MCF 10A (cell line): ENCODE measurements at regions of chr3 and their contacts with region 1.

Region 1: GRCh38 chr3:99645277-99646106 is 7.1 kb downstream of the COL8A1 start:
- DNase-seq: peak; percentile 57
- H3K4me3 Mint-ChIP-seq: no peak overlapping the region
- H3K27ac Mint-ChIP-seq: peak overlapping the region; percentile 63
- H3K4me1 Mint-ChIP-seq: peaks cover 84% of the 10 kb centered on the region
- H3K27me3 Mint-ChIP-seq: no peaks in the 10 kb centered on the region
- CTCF ChIP-seq: peak; percentile 85

Region 2: DNA sequence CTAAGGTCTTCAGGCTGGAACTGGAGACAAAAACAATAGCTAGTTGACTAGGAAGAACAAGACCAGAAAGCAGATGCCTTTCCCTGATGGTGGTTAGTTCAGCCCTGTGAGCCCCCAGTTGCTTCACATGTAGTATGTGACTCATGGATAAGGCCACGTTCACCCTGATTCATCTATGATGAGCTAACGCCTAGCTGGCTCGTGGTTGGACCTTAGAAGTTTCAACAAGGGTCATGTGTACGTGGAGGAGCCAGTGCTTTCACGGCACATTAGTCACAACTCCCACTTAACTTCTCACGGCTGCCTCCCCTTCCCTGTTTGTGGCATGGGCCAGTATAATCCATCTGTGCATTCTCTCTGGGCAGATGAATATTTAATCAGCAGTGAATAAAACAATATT is 13.5 kb after region 1 on chr3:
- CTCF ChIA-PET with region 1: interaction called, 21 read pairs
- POLR2A ChIA-PET with region 1: interaction called, 4 read pairs
- intact Hi-C with region 1: no loop called
- DNase-seq: peak; percentile 94
- H3K4me3 Mint-ChIP-seq: no peak overlapping the region
- H3K27ac Mint-ChIP-seq: peak overlapping the region; percentile 63
- H3K4me1 Mint-ChIP-seq: peaks cover 47% of the 10 kb centered on the region
- H3K27me3 Mint-ChIP-seq: no peaks in the 10 kb centered on the region
- CTCF ChIP-seq: no peak

Region 3: DNA sequence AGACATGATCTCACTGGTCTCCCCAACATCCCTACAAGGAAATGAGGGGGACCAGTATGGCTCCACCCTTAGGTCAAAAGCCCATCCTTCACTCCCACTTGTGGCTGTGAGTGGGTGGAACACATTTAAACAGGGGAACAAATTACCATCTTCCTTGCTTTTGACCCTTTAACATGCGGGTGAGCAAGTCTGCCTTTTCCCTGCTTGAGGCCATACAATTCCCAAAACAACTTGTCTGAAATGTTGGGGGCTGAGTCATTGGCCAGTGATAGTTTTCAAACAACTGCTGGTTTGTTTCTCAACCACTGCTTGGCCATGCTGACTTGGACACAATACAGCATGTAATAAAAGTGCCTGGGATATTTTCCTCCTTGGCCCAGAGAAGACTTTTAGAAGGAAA is 32.5 kb after region 1 on chr3:
- CTCF ChIA-PET with region 1: interaction called, 209 read pairs
- POLR2A ChIA-PET with region 1: interaction called, 47 read pairs
- intact Hi-C with region 1: no loop called
- DNase-seq: peak; percentile 77
- H3K4me3 Mint-ChIP-seq: no peak overlapping the region
- H3K27ac Mint-ChIP-seq: peak overlapping the region; percentile 72
- H3K4me1 Mint-ChIP-seq: peaks cover 44% of the 10 kb centered on the region
- H3K27me3 Mint-ChIP-seq: no peaks in the 10 kb centered on the region
- CTCF ChIP-seq: no peak

Region 4: GRCh38 chr3:99686955-99687612 is 41.6 kb after region 1 on chr3:
- CTCF ChIA-PET with region 1: interaction called, 209 read pairs
- POLR2A ChIA-PET with region 1: interaction called, 6 read pairs
- intact Hi-C with region 1: loop called (anchors 1 kb)
- DNase-seq: peak; percentile 76
- H3K4me3 Mint-ChIP-seq: no peak overlapping the region
- H3K27ac Mint-ChIP-seq: peak overlapping the region; percentile 71
- H3K4me1 Mint-ChIP-seq: peaks cover 15% of the 10 kb centered on the region
- H3K27me3 Mint-ChIP-seq: no peaks in the 10 kb centered on the region
- CTCF ChIP-seq: peak; percentile 69

Region 5: GRCh38 chr3:99747915-99748314 is 102.4 kb after region 1 on chr3:
- CTCF ChIA-PET with region 1: interaction called, 24 read pairs
- POLR2A ChIA-PET with region 1: interaction called, 4 read pairs
- intact Hi-C with region 1: loop called (anchors 2 kb)
- DNase-seq: peak; percentile 49
- H3K4me3 Mint-ChIP-seq: no peak overlapping the region
- H3K27ac Mint-ChIP-seq: no peak overlapping the region
- H3K4me1 Mint-ChIP-seq: peaks cover 14% of the 10 kb centered on the region
- H3K27me3 Mint-ChIP-seq: no peaks in the 10 kb centered on the region
- CTCF ChIP-seq: peak; percentile 39

Region 6: GRCh38 chr3:99803297-99803696 is 157.8 kb after region 1 on chr3:
- CTCF ChIA-PET with region 1: no interaction called
- POLR2A ChIA-PET with region 1: no interaction called
- intact Hi-C with region 1: no loop called
- DNase-seq: no peak
- H3K4me3 Mint-ChIP-seq: no peak overlapping the region
- H3K27ac Mint-ChIP-seq: no peak overlapping the region
- H3K4me1 Mint-ChIP-seq: no peaks in the 10 kb centered on the region
- H3K27me3 Mint-ChIP-seq: no peaks in the 10 kb centered on the region
- CTCF ChIP-seq: no peak